Aorta (tissue), 5 donors: ENCODE measurements at regions of chr1 and their contacts with region 1.

Region 1: GRCh38 chr1:40774266-40774998 is 9.2 kb upstream of the KCNQ4 start:
- DNase-seq: peak in 1 of 2 donors; percentile 86
- ATAC-seq: peak; percentile 57
- H3K4me3 ChIP-seq: no peak overlapping the region
- H3K27ac ChIP-seq: peak overlapping the region in 1 of 2 donors; percentile 64
- H3K4me1 ChIP-seq: no peaks in the 10 kb centered on the region
- H3K27me3 ChIP-seq: no peaks in the 10 kb centered on the region

Region 2: GRCh38 chr1:40709100-40709801 is 65.2 kb before region 1 on chr1:
- intact Hi-C with region 1: loop called in 1 of 2 experiments (anchors 10 kb)
- DNase-seq: peak in 1 of 2 donors; percentile 77
- ATAC-seq: peak; percentile 93
- H3K4me3 ChIP-seq: peak overlapping the region; percentile 82 to 96
- H3K27ac ChIP-seq: peak overlapping the region; percentile 67 to 83
- H3K4me1 ChIP-seq: peaks cover 3 to 7% of the 10 kb centered on the region in 2 donors
- H3K27me3 ChIP-seq: no peaks in the 10 kb centered on the region

Region 3: DNA sequence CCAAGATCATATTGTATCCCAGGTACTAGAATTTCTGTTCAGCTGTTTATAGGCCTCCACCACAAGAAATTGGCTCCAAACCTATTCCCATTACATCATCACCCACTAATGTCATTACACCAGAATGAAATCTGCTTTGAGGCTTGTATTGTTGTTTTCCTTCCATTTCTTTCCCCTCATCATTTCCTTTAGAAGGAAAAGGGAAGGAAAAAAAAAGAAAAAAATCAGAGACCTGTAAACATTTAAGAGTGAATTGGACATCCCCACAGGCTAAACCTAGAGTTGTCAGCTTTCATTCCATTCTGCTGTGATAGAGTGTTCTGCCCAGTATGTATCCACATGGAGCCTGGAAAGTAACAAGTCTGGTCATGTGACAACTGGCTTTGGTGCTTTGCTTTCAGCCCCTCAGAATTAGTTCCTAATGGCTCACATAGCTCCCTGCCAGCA is 38.3 kb before region 1 on chr1:
- intact Hi-C with region 1: no loop called
- DNase-seq: no peak
- ATAC-seq: no peak
- H3K4me3 ChIP-seq: no peak overlapping the region
- H3K27ac ChIP-seq: peak overlapping the region in 1 of 2 donors; percentile 25
- H3K4me1 ChIP-seq: peaks cover 0 to 1% of the 10 kb centered on the region in 2 donors
- H3K27me3 ChIP-seq: no peaks in the 10 kb centered on the region